ENCODE measurements at regions of chr10 and their contacts with region 1.

Region 1: DNA sequence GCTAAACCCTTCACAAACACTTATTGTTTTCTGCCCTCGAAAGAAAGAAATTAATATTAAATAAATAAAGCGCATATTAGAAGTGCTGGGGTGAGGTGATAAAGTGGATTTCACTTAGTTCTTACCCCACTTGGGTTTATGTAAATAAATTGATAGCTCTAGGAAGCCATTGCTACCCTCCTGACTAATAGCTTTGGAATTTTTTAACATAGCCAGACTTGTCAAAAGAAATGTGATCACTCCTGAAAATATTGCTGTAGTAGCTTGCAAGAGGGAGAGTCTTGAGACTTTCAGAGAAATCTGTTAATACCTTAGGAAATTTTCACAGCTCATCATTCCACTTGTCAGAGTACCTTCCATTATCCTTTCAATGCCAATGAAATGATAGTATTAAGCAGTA is 7.6 kb downstream of the ARL5B start:
- DNase-seq: no peak
- H3K4me3 ChIP-seq: no peak overlapping the region
- H3K4me3 Mint-ChIP-seq: peak overlapping the region; percentile 37
- H3K27ac Mint-ChIP-seq: peak overlapping the region; percentile 82
- H3K4me1 ChIP-seq: peaks cover 46% of the 10 kb centered on the region
- H3K4me1 Mint-ChIP-seq: peaks cover 36% of the 10 kb centered on the region
- H3K27me3 ChIP-seq: no peaks in the 10 kb centered on the region
- H3K27me3 Mint-ChIP-seq: no peaks in the 10 kb centered on the region
- CTCF ChIP-seq: no peak

Region 2: DNA sequence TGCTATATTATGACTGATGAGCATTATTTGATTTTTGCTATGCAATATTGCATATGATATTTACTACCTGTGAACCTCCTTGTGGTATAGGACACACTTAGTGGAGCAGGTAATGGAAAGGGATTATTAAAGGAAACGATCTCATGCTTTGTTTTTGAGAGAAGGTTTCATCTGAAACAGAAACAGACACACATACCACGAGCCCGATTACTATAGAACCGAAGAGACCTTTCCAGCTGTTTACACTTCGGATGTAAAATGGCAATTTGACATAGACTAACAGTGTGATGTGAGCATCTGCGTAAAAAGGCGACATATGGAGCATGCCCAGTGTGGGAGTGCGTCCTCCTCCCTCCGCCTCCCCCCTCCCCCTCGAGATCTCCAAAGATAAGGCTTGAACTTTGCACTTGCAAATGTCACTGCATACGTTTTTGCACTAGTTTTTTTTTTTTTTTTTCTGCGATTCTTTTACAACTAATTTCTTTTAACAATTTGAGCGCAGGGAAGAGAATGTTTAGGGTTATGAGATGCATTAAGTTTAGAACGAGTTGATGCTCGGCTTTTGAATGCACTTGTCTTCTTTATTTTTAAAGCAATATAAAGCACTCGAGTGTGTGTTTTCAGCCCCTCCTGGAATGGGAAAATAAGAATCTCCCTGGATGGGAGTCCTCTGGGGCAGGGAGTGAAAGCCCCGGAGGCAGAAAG is 266.5 kb before region 1 on chr10:
- CTCF ChIA-PET with region 1: no interaction called
- POLR2A ChIA-PET with region 1: no interaction called
- intact Hi-C with region 1: loop called (anchors 5 kb)
- DNase-seq: peak; percentile 72 to 85
- H3K4me3 ChIP-seq: peak overlapping the region; percentile 39
- H3K4me3 Mint-ChIP-seq: peak overlapping the region; percentile 72
- H3K27ac Mint-ChIP-seq: peak overlapping the region; percentile 17
- H3K4me1 ChIP-seq: peaks cover 6% of the 10 kb centered on the region; the same call in 1 of the 2 replicates
- H3K4me1 Mint-ChIP-seq: peaks cover 16% of the 10 kb centered on the region
- H3K27me3 ChIP-seq: no peaks in the 10 kb centered on the region
- H3K27me3 Mint-ChIP-seq: no peaks in the 10 kb centered on the region
- CTCF ChIP-seq: no peak

Region 3: GRCh38 chr10:18681971-18682411 is 15.2 kb after region 1 on chr10:
- CTCF ChIA-PET with region 1: no interaction called
- POLR2A ChIA-PET with region 1: no interaction called
- intact Hi-C with region 1: loop called (anchors 1 kb)
- DNase-seq: no peak
- H3K4me3 ChIP-seq: no peak overlapping the region
- H3K4me3 Mint-ChIP-seq: peak overlapping the region; percentile 61
- H3K27ac Mint-ChIP-seq: peak overlapping the region; percentile 83
- H3K4me1 ChIP-seq: peaks cover 28% of the 10 kb centered on the region
- H3K4me1 Mint-ChIP-seq: peaks cover 27% of the 10 kb centered on the region
- H3K27me3 ChIP-seq: no peaks in the 10 kb centered on the region
- H3K27me3 Mint-ChIP-seq: no peaks in the 10 kb centered on the region
- CTCF ChIP-seq: no peak